Vagina (tissue), 2 donors: ENCODE measurements at regions of chr4 and their contacts with region 1.

Region 1: DNA sequence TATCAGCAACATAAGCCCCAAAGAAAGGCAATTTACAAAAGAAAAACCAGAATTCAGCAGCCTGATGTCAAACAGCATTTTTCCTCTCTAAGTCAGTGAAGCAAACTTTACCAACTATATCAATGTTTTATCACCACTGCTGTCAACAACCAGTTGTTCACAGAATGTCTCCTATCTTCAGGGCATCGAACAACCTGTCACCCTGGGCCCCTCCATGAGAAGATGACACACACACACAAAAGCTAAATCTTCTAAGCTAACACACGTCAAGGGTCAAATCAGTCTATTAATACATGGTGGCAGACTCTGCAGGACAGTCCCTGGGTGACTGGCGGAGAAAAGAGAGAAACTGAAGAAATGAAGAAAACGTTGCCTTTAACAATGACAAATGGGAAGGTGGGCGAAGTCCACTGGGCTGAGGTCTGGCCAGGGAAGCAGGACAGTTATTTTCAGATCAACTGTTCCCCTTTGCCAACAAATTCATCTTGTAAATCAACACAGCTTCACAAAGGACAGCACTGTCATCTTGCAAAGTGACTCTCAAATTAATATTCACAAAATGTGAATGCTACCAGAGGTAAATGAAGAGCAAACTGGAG is 13.0 kb downstream of the FAT1 start:
- DNase-seq: no peak
- H3K4me3 ChIP-seq: no peak overlapping the region
- H3K27ac ChIP-seq: no peak overlapping the region
- H3K4me1 ChIP-seq: peaks cover 17% of the 10 kb centered on the region
- H3K27me3 ChIP-seq: no peaks in the 10 kb centered on the region
- CTCF ChIP-seq: no peak
- POLR2A ChIP-seq: no peak

Region 2: GRCh38 chr4:186755550-186756519 is 45.2 kb after region 1 on chr4:
- intact Hi-C with region 1: loop called (anchors 2 kb)
- DNase-seq: no peak
- H3K4me3 ChIP-seq: no peak overlapping the region
- H3K27ac ChIP-seq: no peak overlapping the region
- H3K4me1 ChIP-seq: no peaks in the 10 kb centered on the region
- H3K27me3 ChIP-seq: no peaks in the 10 kb centered on the region
- CTCF ChIP-seq: no peak
- POLR2A ChIP-seq: no peak